MCF 10A (cell line): ENCODE measurements at regions of chr1 and their contacts with region 1.

Region 1: GRCh38 chr1:36248250-36248894 is 24.1 kb downstream of the THRAP3 start:
- DNase-seq: peak; percentile 93
- H3K4me3 Mint-ChIP-seq: peak overlapping the region; percentile 57
- H3K27ac Mint-ChIP-seq: peak overlapping the region; percentile 92
- H3K4me1 Mint-ChIP-seq: peaks cover 28% of the 10 kb centered on the region
- H3K27me3 Mint-ChIP-seq: no peaks in the 10 kb centered on the region
- CTCF ChIP-seq: no peak

Region 2: DNA sequence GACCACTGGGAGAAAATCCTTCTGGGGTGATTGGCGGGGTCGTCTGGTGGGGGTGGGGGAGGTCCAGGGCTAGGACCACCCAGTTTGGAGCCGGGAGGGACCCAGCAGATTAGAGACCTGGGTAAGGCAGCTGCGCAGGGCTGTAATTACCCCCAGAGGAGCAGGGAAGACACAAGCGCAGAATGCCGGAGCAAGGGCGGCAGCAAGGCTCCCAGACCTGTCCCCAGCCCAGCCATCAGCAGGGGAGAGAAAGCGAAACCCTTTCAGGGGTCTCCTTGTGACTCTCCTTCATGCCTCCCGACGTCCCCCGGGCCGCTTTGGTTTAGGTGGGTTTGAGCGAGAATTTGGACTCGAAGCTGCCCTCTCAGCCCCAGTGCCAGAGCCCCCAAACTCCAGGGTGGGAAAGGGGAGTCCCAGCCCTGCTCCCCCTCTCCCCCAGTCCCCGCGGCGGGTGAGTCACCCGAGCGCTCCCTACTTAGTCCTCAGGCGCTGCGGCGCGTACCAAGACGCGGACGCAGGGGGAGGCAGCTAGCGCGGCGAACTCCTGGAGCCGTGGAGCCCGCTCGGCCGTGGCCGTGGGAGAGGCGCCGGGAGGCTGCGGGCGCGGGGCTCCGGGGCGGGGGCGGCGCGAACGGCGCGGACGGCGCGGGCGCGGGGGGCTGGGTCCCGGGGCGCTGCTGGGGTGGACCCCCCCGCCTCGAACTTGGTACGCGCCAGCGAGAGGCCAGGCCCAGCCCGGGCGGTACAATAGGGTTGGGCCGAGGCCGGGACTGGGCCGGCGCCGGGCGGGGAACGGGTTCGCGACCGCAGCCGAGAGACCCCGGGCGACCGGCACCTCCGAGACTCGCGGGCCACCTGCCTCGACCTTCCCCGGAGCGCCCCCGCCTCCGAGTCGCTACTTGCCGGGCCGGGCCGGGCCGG is 92.7 kb before region 1 on chr1 and contains the start of gene MAP7D1:
- CTCF ChIA-PET with region 1: no interaction called
- POLR2A ChIA-PET with region 1: interaction called, 10 read pairs
- intact Hi-C with region 1: no loop called
- DNase-seq: peak; percentile 83
- H3K4me3 Mint-ChIP-seq: peak within 1 kb of the TSS; percentile 86
- H3K27ac Mint-ChIP-seq: peak within 1 kb of the TSS; percentile 97
- H3K4me1 Mint-ChIP-seq: peaks cover 36% of the 10 kb centered on the region
- H3K27me3 Mint-ChIP-seq: no peaks in the 10 kb centered on the region
- CTCF ChIP-seq: no peak
- total RNA-seq, gene MAP7D1: 131 and 170 TPM in 2 replicates